ENCODE measurements at regions of chr2 and their contacts with region 1.

Region 1: DNA sequence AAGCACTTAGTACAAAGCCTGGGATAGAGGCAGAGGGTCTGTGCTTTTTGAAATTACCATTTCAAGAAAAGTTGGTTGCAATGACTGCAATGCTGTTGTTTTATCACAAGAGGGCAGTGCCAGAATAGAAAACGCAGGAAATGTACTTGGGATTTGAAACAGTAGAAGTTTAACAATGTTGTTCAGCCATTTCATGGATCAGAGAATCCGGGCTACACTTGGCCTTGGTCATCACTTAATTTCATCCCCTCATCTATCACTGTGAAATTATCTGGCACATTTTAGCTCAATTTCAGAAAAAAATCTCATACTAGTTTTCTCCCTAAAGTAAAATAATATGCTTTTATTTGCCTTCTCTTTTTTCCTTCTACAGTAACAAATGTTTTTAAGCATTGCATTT is 70.8 kb downstream of the RAPGEF4 start:
- DNase-seq: peak in 2 of 4 donors; percentile 30 to 58
- ATAC-seq: peak; percentile 82
- H3K4me3 ChIP-seq: no peak overlapping the region
- H3K27ac ChIP-seq: no peak overlapping the region
- H3K4me1 ChIP-seq: no peaks in the 10 kb centered on the region
- H3K27me3 ChIP-seq: peaks cover 0 to 2% of the 10 kb centered on the region in 2 donors
- CTCF ChIP-seq: peak; percentile 70 to 81

Region 2: GRCh38 chr2:173027181-173028128 is 221.0 kb after region 1 on chr2:
- intact Hi-C with region 1: loop called in 1 of 2 experiments (anchors 10 kb)
- DNase-seq: peak in 3 of 4 donors; percentile 81 to 93 (median 88)
- ATAC-seq: peak; percentile 98
- H3K4me3 ChIP-seq: no peak overlapping the region
- H3K27ac ChIP-seq: peak overlapping the region in 1 of 2 donors; percentile 46
- H3K4me1 ChIP-seq: peaks cover 0 to 9% of the 10 kb centered on the region in 2 donors
- H3K27me3 ChIP-seq: no peaks in the 10 kb centered on the region
- CTCF ChIP-seq: peak; percentile 87 to 89

Measured in left lung (tissue), 14 donors.